Posterior cingulate gyrus (tissue), 11 donors: ENCODE measurements at regions of chr6 and their contacts with region 1.

Region 1: GRCh38 chr6:119110601-119111548 is 32.4 kb upstream of the FAM184A start:
- DNase-seq: peak in 1 of 10 donors; percentile 27

Region 2: DNA sequence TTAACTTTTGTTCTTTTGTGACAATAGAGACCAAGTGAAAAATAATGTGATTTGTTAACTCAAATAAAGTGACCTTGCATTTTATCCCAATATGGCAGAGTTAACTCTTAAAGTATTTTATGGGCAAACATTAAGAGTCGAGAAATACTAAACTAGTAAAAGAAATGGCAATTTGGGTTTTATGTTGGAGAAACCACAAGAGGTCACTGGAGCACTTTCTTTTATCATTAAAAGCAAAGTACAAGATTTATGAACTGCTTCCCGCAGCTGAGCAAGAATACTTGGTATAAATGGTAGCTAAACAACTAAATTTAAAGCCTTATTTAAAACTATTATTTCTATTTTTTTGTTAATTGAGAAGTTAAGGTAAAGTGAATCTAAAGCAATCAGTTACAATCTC is 142.5 kb before region 1 on chr6:
- intact Hi-C with region 1: loop called (anchors 1 kb)
- DNase-seq: no peak

Region 3: GRCh38 chr6:118980063-118980462 is 130.8 kb before region 1 on chr6:
- intact Hi-C with region 1: no loop called
- DNase-seq: no peak

Region 4: GRCh38 chr6:119078376-119079282 is 32.2 kb before region 1 on chr6 and contains the start of gene FAM184A:
- intact Hi-C with region 1: loop called (anchors 5 kb)
- DNase-seq: peak; percentile 55 to 96 (median 74)